Ascending aorta (tissue), 2 donors: ENCODE measurements at regions of chr20 and their contacts with region 1.

Region 1: GRCh38 chr20:49859846-49860245 is 47.2 kb downstream of the SLC9A8 start:
- DNase-seq: no peak
- H3K4me3 ChIP-seq: no peak overlapping the region
- H3K27ac ChIP-seq: peak overlapping the region; percentile 84 to 91
- H3K4me1 ChIP-seq: peaks cover 11 to 20% of the 10 kb centered on the region in 2 donors
- H3K27me3 ChIP-seq: no peaks in the 10 kb centered on the region
- CTCF ChIP-seq: no peak

Region 2: DNA sequence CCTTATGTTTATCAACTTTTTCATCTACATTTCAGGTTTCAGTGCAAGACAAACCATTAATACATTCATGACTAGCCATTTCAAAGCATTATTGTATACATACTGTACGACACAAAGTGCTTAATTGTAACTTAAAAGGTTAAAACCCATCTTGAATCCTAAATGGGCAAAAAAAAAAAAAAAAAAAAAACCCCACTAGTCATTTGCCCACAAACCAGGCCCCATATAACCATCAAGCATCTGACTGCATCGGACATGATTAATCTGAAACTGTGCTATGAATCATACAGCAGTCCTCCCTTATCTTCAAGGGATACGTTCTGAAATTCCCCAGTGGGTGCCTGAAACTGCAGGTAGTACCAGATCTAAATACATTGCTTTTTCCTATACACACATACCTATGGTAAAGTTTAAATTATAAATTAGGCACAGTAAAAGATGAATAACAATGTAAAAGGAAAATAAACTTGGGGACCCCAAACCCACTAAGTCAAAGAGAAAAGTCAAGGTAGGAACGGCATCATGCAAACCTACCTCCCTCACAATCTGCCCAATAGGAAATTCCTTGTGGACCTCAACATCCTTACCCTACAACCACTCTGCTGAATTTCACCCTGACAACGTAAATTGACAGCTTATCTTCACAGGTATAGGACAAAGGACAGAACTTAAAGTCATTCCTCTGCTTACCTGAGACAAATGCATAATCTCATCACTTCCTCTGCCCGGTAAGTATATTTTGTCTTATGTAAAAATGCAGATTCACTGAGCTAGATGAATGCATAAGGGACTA is 160.4 kb before region 1 on chr20:
- intact Hi-C with region 1: no loop called
- DNase-seq: no peak
- H3K4me3 ChIP-seq: no peak overlapping the region
- H3K27ac ChIP-seq: no peak overlapping the region
- H3K4me1 ChIP-seq: peaks cover 0 to 14% of the 10 kb centered on the region in 2 donors
- H3K27me3 ChIP-seq: no peaks in the 10 kb centered on the region
- CTCF ChIP-seq: no peak

Region 3: GRCh38 chr20:49874696-49875095 is 14.8 kb after region 1 on chr20:
- intact Hi-C with region 1: loop called (anchors 2 kb)
- DNase-seq: peak in 1 of 2 donors; percentile 56
- H3K4me3 ChIP-seq: no peak overlapping the region
- H3K27ac ChIP-seq: peak overlapping the region; percentile 69 to 83
- H3K4me1 ChIP-seq: peaks cover 8 to 26% of the 10 kb centered on the region in 2 donors
- H3K27me3 ChIP-seq: no peaks in the 10 kb centered on the region
- CTCF ChIP-seq: no peak